ENCODE measurements at regions of chr7 and their contacts with region 1.

Region 1: DNA sequence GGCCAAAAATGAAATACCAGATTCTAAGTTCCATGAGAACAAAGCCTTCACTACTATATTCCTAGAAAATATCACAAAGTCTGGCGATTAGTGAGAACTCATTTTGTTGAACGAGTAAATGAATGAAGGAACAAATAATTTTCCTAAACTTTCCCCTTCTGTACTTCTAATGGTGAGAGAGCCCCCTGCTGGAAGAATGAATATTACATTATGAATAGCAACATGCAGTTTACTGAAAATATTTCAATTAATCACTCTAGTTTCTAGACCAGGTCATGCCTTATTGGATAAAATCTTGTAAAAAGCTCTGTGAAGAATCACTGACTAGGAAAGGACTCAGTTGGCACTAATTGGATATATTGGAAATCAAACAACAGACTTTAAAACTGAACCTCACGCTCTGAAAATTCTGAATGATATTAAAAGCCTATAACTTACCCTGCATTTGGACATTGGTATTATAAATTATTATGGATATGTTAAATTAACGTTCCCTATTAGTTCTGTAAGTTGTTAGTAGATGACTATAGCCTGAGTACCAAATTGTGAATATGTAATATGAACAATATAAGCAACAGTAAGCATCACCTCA is 32.4 kb upstream of the MTPN start:
- DNase-seq: no peak
- H3K4me3 Mint-ChIP-seq: no peak overlapping the region
- H3K27ac Mint-ChIP-seq: no peak overlapping the region
- H3K4me1 Mint-ChIP-seq: peaks cover 7% of the 10 kb centered on the region
- H3K27me3 Mint-ChIP-seq: peaks cover 3% of the 10 kb centered on the region

Region 2: DNA sequence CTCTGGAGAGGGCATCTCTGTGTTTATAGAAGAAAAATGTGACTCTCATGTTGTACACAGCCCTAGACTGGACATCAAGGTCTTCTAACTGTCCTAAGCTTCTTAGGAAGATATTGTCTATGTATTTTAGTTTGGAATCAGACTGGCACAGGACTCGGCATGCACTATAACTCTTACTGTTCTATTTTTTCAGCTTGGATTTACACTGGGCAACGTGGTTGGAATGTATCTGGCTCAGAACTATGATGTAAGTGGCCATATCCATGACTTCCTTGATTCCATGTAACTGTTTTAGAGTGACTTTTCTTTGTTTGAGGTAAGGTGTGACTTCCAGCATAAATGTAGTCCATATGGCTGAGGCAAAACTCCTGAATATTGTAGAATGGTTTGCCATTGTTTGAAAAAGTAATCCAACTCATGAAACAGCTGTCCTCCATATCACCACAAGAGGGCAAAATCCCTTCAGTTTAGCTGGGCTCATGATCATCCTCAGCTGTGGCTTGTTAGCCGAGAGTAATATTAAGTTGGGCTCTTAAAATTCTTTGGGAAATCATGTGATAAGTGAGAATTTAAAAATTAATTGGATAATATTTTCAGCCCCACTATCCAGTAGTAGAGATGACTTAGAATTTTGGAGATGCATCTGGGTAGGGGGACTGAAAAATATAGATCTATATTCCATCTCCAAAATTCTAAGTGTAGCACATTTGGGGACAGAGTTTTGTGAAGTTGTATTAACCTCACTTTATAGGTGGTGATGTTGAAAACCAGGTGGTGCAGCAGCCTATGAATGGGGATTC is 336.8 kb before region 1 on chr7:
- CTCF ChIA-PET with region 1: interaction called, 17 read pairs
- POLR2A ChIA-PET with region 1: no interaction called
- intact Hi-C with region 1: loop called (anchors 2 kb)
- DNase-seq: no peak
- H3K4me3 Mint-ChIP-seq: no peak overlapping the region
- H3K27ac Mint-ChIP-seq: no peak overlapping the region
- H3K4me1 Mint-ChIP-seq: peaks cover 25% of the 10 kb centered on the region
- H3K27me3 Mint-ChIP-seq: no peaks in the 10 kb centered on the region

Region 3: DNA sequence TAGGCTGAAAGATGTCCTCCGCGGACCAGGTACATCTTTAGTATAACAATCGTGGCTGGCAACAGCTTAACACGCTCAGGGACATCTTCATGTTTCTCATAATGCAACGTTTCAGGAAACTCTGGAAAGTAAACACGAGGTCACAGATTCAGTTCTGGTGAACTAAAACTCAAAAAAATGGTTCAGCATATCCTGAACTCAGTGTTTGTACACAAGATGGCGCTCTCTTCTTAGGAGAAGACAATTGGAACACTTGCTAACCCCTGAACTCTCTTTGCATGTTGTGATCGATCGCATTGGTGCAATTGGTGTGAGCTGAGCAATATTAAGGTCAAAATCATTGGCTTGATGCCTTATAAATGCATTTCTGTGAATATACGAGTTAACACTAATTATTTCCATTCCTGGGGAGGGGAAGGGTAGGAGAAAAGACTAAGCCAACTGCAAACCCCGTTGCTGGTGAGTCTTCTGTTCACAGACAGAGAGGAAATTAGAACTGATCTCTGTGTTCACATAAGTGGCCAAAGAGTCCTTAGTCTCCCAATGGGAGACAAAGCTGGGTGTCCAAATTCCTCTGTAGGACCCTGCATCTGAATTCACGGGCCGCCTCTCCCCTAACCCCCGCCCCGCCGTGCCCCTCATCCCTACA is 208.4 kb before region 1 on chr7:
- CTCF ChIA-PET with region 1: interaction called, 87 read pairs
- POLR2A ChIA-PET with region 1: no interaction called
- intact Hi-C with region 1: loop called (anchors 1 kb)
- DNase-seq: no peak
- H3K4me3 Mint-ChIP-seq: no peak overlapping the region
- H3K27ac Mint-ChIP-seq: no peak overlapping the region
- H3K4me1 Mint-ChIP-seq: peaks cover 7% of the 10 kb centered on the region
- H3K27me3 Mint-ChIP-seq: peaks cover 14% of the 10 kb centered on the region

Region 4: GRCh38 chr7:135950972-135951371 is 58.6 kb before region 1 on chr7:
- CTCF ChIA-PET with region 1: no interaction called
- POLR2A ChIA-PET with region 1: no interaction called
- intact Hi-C with region 1: no loop called
- DNase-seq: no peak
- H3K4me3 Mint-ChIP-seq: no peak overlapping the region
- H3K27ac Mint-ChIP-seq: no peak overlapping the region
- H3K4me1 Mint-ChIP-seq: peaks cover 27% of the 10 kb centered on the region
- H3K27me3 Mint-ChIP-seq: no peaks in the 10 kb centered on the region

Region 5: DNA sequence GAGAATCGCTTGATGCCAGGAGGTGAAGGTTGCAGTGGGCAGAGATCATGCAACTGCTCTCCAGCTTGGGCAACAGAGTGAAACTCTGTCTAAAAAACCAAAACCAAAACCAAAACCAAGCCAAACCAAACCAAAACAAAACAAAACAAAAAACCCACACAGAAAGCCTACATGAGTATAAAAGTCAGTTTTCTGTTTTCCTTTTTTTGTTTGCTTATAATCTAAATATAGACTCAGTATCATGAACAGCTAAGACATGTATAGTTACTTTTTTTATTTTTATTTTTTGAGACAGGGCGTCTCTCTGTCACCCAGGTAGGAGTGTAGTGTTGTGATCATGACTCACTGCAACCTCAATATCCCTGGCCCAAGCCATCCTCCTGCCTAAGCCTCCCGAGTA is 15.6 kb before region 1 on chr7:
- CTCF ChIA-PET with region 1: interaction called, 31 read pairs
- POLR2A ChIA-PET with region 1: no interaction called
- intact Hi-C with region 1: loop called (anchors 2 kb)
- DNase-seq: no peak
- H3K4me3 Mint-ChIP-seq: no peak overlapping the region
- H3K27ac Mint-ChIP-seq: peak overlapping the region; percentile 54
- H3K4me1 Mint-ChIP-seq: peaks cover 25% of the 10 kb centered on the region
- H3K27me3 Mint-ChIP-seq: no peaks in the 10 kb centered on the region